ENCODE measurements at regions of chr11 and their contacts with region 1.

Region 1: DNA sequence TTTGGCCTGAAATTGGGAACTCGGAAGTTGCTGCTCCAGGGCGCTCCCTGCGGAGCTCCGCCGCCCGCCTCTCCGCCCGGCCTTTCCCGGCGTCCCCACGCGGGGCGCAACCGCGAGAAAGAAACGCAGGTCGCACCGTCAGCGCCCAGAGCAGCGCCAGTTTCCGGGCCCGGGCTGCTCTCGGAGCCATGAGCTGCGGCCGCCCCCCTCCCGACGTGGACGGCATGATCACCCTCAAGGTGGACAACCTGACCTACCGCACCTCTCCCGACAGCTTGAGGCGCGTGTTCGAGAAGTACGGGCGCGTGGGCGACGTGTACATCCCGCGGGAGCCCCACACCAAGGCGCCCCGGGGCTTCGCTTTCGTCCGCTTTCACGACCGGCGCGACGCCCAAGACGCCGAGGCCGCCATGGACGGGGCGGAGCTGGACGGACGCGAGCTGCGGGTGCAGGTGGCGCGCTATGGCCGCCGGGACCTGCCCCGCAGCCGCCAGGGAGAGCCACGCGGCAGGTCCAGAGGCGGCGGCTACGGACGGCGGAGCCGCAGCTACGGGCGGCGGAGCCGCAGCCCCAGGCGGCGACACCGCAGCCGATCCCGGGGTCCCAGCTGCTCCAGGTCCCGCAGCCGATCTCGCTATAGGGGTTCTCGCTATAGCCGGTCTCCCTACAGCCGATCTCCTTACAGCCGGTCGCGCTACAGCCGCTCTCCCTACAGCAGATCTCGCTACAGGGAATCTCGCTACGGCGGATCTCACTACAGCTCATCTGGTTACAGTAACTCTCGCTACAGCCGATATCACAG is 521 bp downstream of the SRSF8 start:
- DNase-seq: peak; percentile 62 to 79 (median 74)
- ATAC-seq: peak; percentile 81
- H3K4me3 ChIP-seq: peak overlapping the region; percentile 87
- H3K4me3 Mint-ChIP-seq: peak overlapping the region; percentile 93 to 100 (median 96)
- H3K27ac ChIP-seq: peak overlapping the region; percentile 96
- H3K27ac Mint-ChIP-seq: peak overlapping the region; percentile 93 to 100 (median 97)
- H3K4me1 ChIP-seq: peaks cover 16 to 17% of the 10 kb centered on the region in 2 donors
- H3K4me1 Mint-ChIP-seq: peaks cover 17 to 38% (median 30%) of the 10 kb centered on the region in 7 donors
- H3K27me3 ChIP-seq: no peaks in the 10 kb centered on the region
- H3K27me3 Mint-ChIP-seq: peaks cover 0 to 23% (median 0%) of the 10 kb centered on the region in 5 donors

Region 2: GRCh38 chr11:93741094-93741881 is 1326.0 kb before region 1 on chr11 and contains the starts of genes C11orf54 and TAF1D:
- CTCF ChIA-PET with region 1: no interaction called
- POLR2A ChIA-PET with region 1: interaction called, 4 read pairs
- intact Hi-C with region 1: loop called (anchors 1 to 2 kb)
- DNase-seq: peak; percentile 85 to 98 (median 96)
- ATAC-seq: peak; percentile 96
- H3K4me3 ChIP-seq: peak within 1 kb of the TSS; percentile 88
- H3K4me3 Mint-ChIP-seq: peak within 1 kb of the TSS; percentile 95 to 100 (median 100)
- H3K27ac ChIP-seq: peak within 1 kb of the TSS; percentile 84
- H3K27ac Mint-ChIP-seq: peak within 1 kb of the TSS; percentile 98 to 100 (median 100)
- H3K4me1 ChIP-seq: peaks cover 28 to 31% of the 10 kb centered on the region in 2 donors
- H3K4me1 Mint-ChIP-seq: peaks cover 37 to 92% (median 71%) of the 10 kb centered on the region in 7 donors
- H3K27me3 ChIP-seq: no peaks in the 10 kb centered on the region
- H3K27me3 Mint-ChIP-seq: peaks cover 0 to 3% (median 0%) of the 10 kb centered on the region in 5 donors
- total RNA-seq, gene C11orf54: 16.4 to 42.5 (median 27.2) TPM
- total RNA-seq, gene TAF1D: 116 to 197 (median 183) TPM

Region 3: DNA sequence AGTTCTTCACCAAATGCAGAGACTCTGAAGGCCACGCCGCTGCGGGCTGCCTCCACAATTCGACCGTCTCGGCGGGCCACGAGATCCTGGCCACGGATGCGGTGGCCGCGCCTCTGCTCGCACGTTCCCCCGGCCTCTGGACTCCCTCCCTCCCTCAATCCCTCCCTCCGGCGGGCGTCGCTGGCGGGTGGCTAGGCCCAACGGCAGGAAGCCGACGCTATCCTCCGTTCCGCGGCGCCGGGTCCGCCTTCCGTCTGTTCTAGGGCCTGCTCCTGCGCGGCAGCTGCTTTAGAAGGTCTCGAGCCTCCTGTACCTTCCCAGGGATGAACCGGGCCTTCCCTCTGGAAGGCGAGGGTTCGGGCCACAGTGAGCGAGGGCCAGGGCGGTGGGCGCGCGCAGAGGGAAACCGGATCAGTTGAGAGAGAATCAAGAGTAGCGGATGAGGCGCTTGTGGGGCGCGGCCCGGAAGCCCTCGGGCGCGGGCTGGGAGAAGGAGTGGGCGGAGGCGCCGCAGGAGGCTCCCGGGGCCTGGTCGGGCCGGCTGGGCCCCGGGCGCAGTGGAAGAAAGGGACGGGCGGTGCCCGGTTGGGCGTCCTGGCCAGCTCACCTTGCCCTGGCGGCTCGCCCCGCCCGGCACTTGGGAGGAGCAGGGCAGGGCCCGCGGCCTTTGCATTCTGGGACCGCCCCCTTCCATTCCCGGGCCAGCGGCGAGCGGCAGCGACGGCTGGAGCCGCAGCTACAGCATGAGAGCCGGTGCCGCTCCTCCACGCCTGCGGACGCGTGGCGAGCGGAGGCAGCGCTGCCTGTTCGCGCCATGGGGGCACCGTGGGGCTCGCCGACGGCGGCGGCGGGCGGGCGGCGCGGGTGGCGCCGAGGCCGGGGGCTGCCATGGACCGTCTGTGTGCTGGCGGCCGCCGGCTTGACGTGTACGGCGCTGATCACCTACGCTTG is 523.3 kb before region 1 on chr11 and contains the start of gene FUT4:
- CTCF ChIA-PET with region 1: no interaction called
- POLR2A ChIA-PET with region 1: interaction called, 3 read pairs
- intact Hi-C with region 1: loop called in 1 of 2 experiments (anchors 1 kb)
- DNase-seq: peak; percentile 51 to 83 (median 70)
- ATAC-seq: peak; percentile 84
- H3K4me3 ChIP-seq: peak within 1 kb of the TSS; percentile 85
- H3K4me3 Mint-ChIP-seq: peak within 1 kb of the TSS; percentile 93 to 100 (median 98)
- H3K27ac ChIP-seq: peak within 1 kb of the TSS; percentile 88
- H3K27ac Mint-ChIP-seq: peak within 1 kb of the TSS; percentile 96 to 100 (median 99)
- H3K4me1 ChIP-seq: peaks cover 22 to 29% of the 10 kb centered on the region in 2 donors
- H3K4me1 Mint-ChIP-seq: peaks cover 24 to 49% (median 41%) of the 10 kb centered on the region in 7 donors
- H3K27me3 ChIP-seq: no peaks in the 10 kb centered on the region
- H3K27me3 Mint-ChIP-seq: no peaks in the 10 kb centered on the region
- total RNA-seq, gene FUT4: 5.6 to 10.2 (median 6.9) TPM

Region 4: DNA sequence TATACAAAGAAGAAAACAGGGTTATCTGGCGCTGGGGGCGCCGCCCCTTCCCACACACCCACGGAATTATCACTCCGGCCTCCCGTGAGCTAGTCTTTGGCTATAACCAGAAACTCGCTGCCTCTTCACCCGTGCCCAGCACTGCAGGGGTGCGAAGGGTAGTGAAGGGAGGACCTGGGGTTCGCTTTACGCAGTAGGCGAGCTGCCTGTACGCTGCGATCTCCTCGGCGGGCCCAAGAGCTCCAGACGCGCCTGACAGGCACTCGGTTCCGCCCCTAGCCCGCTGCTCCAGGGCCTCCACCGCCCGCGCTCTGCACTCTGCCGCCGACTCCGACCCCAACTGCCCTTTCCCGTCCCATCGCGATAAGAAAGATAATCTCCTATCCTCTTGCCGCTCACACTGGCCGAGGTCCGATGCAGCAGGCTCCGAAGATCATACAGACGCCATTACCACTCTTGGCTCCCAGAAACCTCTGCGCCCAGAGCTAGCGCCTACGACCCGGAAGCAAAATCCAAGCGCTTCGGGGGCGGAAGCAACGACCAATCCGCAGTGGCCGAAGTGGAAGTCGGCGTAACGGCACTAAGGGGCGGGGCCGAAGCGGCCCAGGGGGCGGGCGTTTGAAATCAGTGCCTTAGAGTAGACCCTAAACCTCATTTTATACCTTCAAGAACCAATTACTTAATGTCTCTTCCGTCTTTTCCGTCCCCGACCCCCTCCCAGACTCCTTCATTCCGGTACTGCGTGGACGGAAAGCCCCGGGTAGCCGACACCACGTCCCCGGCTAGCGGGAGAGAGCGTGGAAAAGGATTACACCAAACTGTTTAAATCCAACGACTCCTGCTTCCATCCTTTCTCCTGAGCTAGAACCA is 93.9 kb before region 1 on chr11 and contains the starts of genes CWC15 and KDM4D:
- CTCF ChIA-PET with region 1: interaction called, 6 read pairs
- POLR2A ChIA-PET with region 1: interaction called, 53 read pairs
- intact Hi-C with region 1: loop called (anchors 1 kb)
- DNase-seq: peak; percentile 84 to 94 (median 92)
- ATAC-seq: peak; percentile 100
- H3K4me3 ChIP-seq: peak within 1 kb of the TSS; percentile 81
- H3K4me3 Mint-ChIP-seq: peak within 1 kb of the TSS; percentile 88 to 100 (median 96)
- H3K27ac ChIP-seq: peak within 1 kb of the TSS; percentile 91
- H3K27ac Mint-ChIP-seq: peak within 1 kb of the TSS; percentile 92 to 100 (median 96)
- H3K4me1 ChIP-seq: peaks cover 9 to 13% of the 10 kb centered on the region in 2 donors
- H3K4me1 Mint-ChIP-seq: peaks cover 17 to 63% (median 39%) of the 10 kb centered on the region in 7 donors
- H3K27me3 ChIP-seq: no peaks in the 10 kb centered on the region
- H3K27me3 Mint-ChIP-seq: no peaks in the 10 kb centered on the region
- total RNA-seq, gene CWC15: 64.1 to 94.7 (median 66.8) TPM
- total RNA-seq, gene KDM4D: 0.32 to 0.70 (median 0.68) TPM

Region 5: DNA sequence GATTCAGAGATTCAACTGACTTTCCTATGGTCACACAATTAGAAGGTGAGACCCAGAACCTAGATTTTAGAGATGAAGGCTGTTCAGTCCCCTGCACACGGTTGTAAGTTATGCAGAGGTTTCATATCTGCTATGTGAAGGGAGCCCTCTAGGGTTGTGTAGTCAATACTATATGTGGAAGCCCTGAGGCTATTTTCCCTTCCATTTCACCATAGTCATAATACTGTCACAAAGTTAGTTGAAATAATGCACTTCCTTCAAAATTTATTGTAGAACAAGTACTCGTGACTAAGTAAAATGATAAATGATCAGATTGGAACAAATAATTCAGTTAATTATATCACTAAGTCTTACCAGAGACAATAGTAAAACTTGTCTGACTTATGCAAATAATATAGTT is 71.2 kb after region 1 on chr11:
- CTCF ChIA-PET with region 1: interaction called, 6 read pairs
- POLR2A ChIA-PET with region 1: interaction called, 7 read pairs
- intact Hi-C with region 1: loop called (anchors 1 kb)
- DNase-seq: no peak
- ATAC-seq: peak; percentile 57
- H3K4me3 ChIP-seq: no peak overlapping the region
- H3K4me3 Mint-ChIP-seq: no peak overlapping the region
- H3K27ac ChIP-seq: no peak overlapping the region
- H3K27ac Mint-ChIP-seq: no peak overlapping the region
- H3K4me1 ChIP-seq: no peaks in the 10 kb centered on the region
- H3K4me1 Mint-ChIP-seq: peaks cover 0 to 9% (median 0%) of the 10 kb centered on the region in 7 donors
- H3K27me3 ChIP-seq: no peaks in the 10 kb centered on the region
- H3K27me3 Mint-ChIP-seq: peaks cover 0 to 10% (median 6%) of the 10 kb centered on the region in 5 donors

Region 6: GRCh38 chr11:95241681-95242081 is 174.4 kb after region 1 on chr11:
- CTCF ChIA-PET with region 1: no interaction called
- POLR2A ChIA-PET with region 1: no interaction called
- intact Hi-C with region 1: no loop called
- DNase-seq: no peak
- ATAC-seq: peak; percentile 29
- H3K4me3 ChIP-seq: no peak overlapping the region
- H3K4me3 Mint-ChIP-seq: no peak overlapping the region
- H3K27ac ChIP-seq: no peak overlapping the region
- H3K27ac Mint-ChIP-seq: no peak overlapping the region
- H3K4me1 ChIP-seq: no peaks in the 10 kb centered on the region
- H3K4me1 Mint-ChIP-seq: peaks cover 0 to 12% (median 5%) of the 10 kb centered on the region in 7 donors
- H3K27me3 ChIP-seq: no peaks in the 10 kb centered on the region
- H3K27me3 Mint-ChIP-seq: no peaks in the 10 kb centered on the region

Region 7: GRCh38 chr11:95680169-95680929 is 613.1 kb after region 1 on chr11:
- CTCF ChIA-PET with region 1: no interaction called
- POLR2A ChIA-PET with region 1: no interaction called
- intact Hi-C with region 1: no loop called
- DNase-seq: no peak
- ATAC-seq: no peak
- H3K4me3 ChIP-seq: no peak overlapping the region
- H3K4me3 Mint-ChIP-seq: peak overlapping the region; percentile 21 to 78 (median 69)
- H3K27ac ChIP-seq: peak overlapping the region; percentile 60
- H3K27ac Mint-ChIP-seq: peak overlapping the region in 7 of 9 donors; percentile 44 to 87 (median 73)
- H3K4me1 ChIP-seq: peaks cover 0 to 41% of the 10 kb centered on the region in 2 donors
- H3K4me1 Mint-ChIP-seq: peaks cover 27 to 89% (median 71%) of the 10 kb centered on the region in 7 donors
- H3K27me3 ChIP-seq: no peaks in the 10 kb centered on the region
- H3K27me3 Mint-ChIP-seq: no peaks in the 10 kb centered on the region

Region 8: DNA sequence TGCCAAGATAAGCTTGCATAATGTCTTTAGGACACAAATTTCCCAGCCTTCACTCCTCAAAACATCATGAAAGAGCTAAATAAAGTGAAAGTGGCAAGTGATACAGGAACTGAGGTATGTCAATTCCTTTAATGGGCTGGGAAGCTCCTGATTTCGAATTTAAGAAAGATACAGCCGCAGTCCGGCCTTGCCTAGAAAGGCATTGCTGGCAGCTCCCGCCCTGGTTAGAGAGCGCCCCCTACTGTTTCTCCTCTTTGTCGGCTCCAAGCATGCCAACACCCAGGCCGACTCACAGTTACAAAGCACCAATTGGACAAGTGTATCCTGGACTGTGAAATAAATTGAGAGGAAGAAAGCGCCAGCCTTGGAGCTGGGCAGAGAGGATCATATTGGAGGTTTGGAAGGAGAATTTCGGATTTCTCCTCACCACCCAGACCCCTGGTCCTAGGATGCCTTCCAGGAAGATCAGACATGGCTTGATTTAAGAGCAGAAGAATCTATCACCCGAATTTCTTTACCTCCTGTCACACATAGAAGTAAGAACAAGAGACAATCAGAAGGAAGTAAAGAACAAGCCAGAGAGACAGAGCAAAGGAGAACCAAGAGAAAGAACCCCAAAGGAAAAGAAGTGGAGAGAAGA is 638.4 kb after region 1 on chr11:
- CTCF ChIA-PET with region 1: interaction called, 3 read pairs
- POLR2A ChIA-PET with region 1: interaction called, 5 read pairs
- intact Hi-C with region 1: loop called (anchors 1 to 2 kb)
- DNase-seq: peak; percentile 67 to 91 (median 86)
- ATAC-seq: peak; percentile 98
- H3K4me3 ChIP-seq: no peak overlapping the region
- H3K4me3 Mint-ChIP-seq: no peak overlapping the region
- H3K27ac ChIP-seq: peak overlapping the region; percentile 55
- H3K27ac Mint-ChIP-seq: no peak overlapping the region
- H3K4me1 ChIP-seq: peaks cover 29 to 43% of the 10 kb centered on the region in 2 donors
- H3K4me1 Mint-ChIP-seq: peaks cover 3 to 15% (median 11%) of the 10 kb centered on the region in 7 donors
- H3K27me3 ChIP-seq: no peaks in the 10 kb centered on the region
- H3K27me3 Mint-ChIP-seq: peaks cover 0 to 3% (median 0%) of the 10 kb centered on the region in 5 donors